ENCODE measurements at regions of chr4 and their contacts with region 1.

Region 1: DNA sequence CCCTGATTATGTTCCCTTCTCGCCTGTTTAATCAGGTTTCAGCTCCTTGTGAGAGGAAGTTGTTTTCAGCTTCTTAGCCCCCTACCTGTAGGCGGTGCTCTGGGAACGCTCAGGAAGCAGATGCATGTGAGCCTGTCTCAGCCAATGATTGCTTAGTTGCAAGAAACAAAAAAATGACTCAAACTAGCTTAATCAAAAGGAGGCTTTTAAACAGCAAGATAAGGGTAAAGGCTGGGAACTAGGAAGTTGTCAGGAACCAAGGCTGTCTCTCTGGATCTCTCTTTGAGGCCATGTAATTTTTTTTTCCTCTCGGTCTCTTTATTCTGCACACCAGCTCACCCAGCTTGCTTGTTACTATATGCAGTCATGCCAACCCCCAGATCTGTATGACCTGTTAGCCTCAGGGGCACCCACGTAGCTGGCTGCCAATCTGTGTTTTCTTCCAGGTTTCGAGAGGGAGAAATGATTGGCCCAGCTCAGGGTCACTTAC is 109.1 kb downstream of the PTTG2 start:
- DNase-seq: peak; percentile 55
- H3K4me3 Mint-ChIP-seq: no peak overlapping the region
- H3K27ac Mint-ChIP-seq: peak overlapping the region; percentile 52
- H3K4me1 Mint-ChIP-seq: peaks cover 27% of the 10 kb centered on the region
- H3K27me3 Mint-ChIP-seq: no peaks in the 10 kb centered on the region

Region 2: GRCh38 chr4:38091636-38092035 is 22.3 kb after region 1 on chr4:
- CTCF ChIA-PET with region 1: interaction called, 10 read pairs
- POLR2A ChIA-PET with region 1: interaction called, 7 read pairs
- intact Hi-C with region 1: no loop called
- DNase-seq: no peak
- H3K4me3 Mint-ChIP-seq: peak overlapping the region; percentile 50
- H3K27ac Mint-ChIP-seq: peak overlapping the region; percentile 88
- H3K4me1 Mint-ChIP-seq: peaks cover 42% of the 10 kb centered on the region
- H3K27me3 Mint-ChIP-seq: no peaks in the 10 kb centered on the region

Region 3: GRCh38 chr4:38334810-38335537 is 265.7 kb after region 1 on chr4:
- CTCF ChIA-PET with region 1: no interaction called
- POLR2A ChIA-PET with region 1: no interaction called
- intact Hi-C with region 1: no loop called
- DNase-seq: no peak
- H3K4me3 Mint-ChIP-seq: no peak overlapping the region
- H3K27ac Mint-ChIP-seq: no peak overlapping the region
- H3K4me1 Mint-ChIP-seq: peaks cover 32% of the 10 kb centered on the region
- H3K27me3 Mint-ChIP-seq: peaks cover 30% of the 10 kb centered on the region

Measured in activated CD4-positive, alpha-beta memory T cell treated with anti-CD3 and anti-CD28 coated beads for 36 hours (primary cell).